ENCODE measurements at regions of chr3 and their contacts with region 1.

Region 1: GRCh38 chr3:15033103-15033502 is 32.0 kb downstream of the MRPS25 start:
- DNase-seq: no peak
- ATAC-seq: no peak
- H3K4me3 ChIP-seq: no peak overlapping the region
- H3K27ac ChIP-seq: no peak overlapping the region
- H3K4me1 ChIP-seq: no peaks in the 10 kb centered on the region
- H3K27me3 ChIP-seq: no peaks in the 10 kb centered on the region
- CTCF ChIP-seq: no peak

Region 2: GRCh38 chr3:14780927-14781507 is 252.1 kb before region 1 on chr3:
- CTCF ChIA-PET with region 1: interaction called, 15 read pairs
- POLR2A ChIA-PET with region 1: no interaction called
- intact Hi-C with region 1: no loop called
- DNase-seq: peak; percentile 74
- ATAC-seq: peak; percentile 99
- H3K4me3 ChIP-seq: no peak overlapping the region
- H3K27ac ChIP-seq: no peak overlapping the region
- H3K4me1 ChIP-seq: no peaks in the 10 kb centered on the region
- H3K27me3 ChIP-seq: no peaks in the 10 kb centered on the region
- CTCF ChIP-seq: peak; percentile 95

Region 3: DNA sequence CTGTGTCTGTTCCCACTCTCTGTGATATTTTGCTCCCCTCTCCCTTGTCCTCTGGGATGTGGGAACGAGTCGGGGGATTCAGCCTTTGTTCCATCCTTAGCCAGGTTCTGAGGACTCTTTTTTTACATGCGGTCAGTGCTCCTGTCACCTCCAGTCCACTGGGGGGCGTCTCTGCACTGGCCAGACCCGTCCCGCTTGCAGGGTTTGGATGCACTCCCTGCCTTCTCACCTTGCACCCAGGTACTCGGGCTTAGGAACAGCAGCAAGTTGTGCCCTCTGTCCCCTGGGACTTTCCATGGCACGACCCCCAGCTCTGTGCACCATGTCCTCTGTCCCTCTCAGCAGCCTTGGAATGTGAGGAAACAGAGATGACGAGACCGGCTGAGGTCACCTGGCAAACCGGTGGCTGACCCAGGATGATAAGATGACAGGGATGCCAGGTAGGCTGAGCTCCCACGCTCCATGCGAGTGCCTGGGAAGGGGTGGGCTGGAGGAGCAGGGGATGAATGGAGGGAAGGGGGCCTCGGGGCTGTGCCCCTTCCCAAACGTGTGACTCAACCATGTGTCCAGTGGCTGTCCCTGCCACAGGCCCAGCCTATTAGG is 241.7 kb before region 1 on chr3:
- CTCF ChIA-PET with region 1: no interaction called
- POLR2A ChIA-PET with region 1: no interaction called
- intact Hi-C with region 1: no loop called
- DNase-seq: peak; percentile 68
- ATAC-seq: peak; percentile 91
- H3K4me3 ChIP-seq: peak overlapping the region; percentile 28; the same call in 1 of the 2 replicates
- H3K27ac ChIP-seq: no peak overlapping the region
- H3K4me1 ChIP-seq: no peaks in the 10 kb centered on the region
- H3K27me3 ChIP-seq: peaks cover 38% of the 10 kb centered on the region
- CTCF ChIP-seq: peak; percentile 92

Region 4: DNA sequence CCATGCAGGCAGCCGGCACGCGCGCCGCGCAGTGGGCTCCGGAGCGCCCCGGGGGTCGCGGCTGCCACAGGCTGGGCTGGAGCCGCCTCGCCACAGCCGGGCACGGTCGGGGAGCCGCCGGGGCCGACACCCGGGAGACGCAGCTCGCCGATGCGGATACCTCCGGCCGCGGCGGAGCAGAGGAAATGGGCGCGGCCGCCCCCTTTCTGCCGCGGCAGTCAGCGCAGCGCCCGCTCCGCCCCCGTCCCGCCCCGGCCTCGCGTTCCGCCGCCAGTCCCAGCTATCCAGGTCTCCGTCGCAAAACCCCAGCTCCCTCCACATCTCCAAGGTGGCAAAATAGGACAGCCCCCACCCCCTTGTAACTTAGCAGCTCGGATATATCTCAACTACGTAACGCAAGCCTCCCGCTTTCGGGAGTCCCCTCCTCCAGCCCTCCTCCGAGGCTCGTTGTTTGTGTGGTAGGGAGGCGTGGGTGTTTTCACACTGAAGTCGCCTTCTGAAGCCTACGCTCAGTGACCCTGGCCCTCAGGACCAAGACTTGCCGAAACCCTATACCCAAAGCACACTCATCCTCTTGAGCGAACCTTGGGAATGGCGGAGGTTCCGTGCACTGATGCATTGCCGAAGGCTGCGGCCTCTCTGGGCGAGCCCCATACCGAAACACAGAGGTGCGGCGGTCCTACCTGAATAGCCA is 299.4 kb after region 1 on chr3 and contains the start of gene SH3BP5:
- CTCF ChIA-PET with region 1: no interaction called
- POLR2A ChIA-PET with region 1: no interaction called
- intact Hi-C with region 1: no loop called
- DNase-seq: peak; percentile 81
- ATAC-seq: peak; percentile 76
- H3K4me3 ChIP-seq: peak within 1 kb of the TSS; percentile 99
- H3K27ac ChIP-seq: no peak within 1 kb of the TSS
- H3K4me1 ChIP-seq: peaks cover 29% of the 10 kb centered on the region
- H3K27me3 ChIP-seq: no peaks in the 10 kb centered on the region
- CTCF ChIP-seq: peak; percentile 51; the same call in 1 of the 2 replicates
- total RNA-seq, gene SH3BP5: 21.2 and 23.0 TPM in 2 replicates

Region 5: DNA sequence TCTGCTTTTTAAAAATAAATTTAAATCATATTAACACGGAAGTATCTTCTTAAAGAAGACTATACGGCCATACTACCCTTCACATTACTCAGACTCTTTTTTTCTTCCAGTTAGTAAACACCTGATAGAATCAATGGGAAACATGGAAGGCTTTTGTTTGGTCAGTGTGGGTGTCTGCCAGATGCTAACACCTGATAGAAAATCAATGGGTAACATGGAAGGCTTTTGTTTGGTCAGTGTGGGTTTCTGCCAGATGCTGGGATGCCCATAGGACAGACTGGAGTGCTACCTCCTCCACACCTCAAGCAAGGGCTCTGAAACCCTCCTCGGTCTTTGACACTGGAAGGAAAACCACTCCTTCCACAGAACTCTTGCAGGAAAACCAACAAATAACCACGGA is 539.0 kb after region 1 on chr3:
- CTCF ChIA-PET with region 1: no interaction called
- POLR2A ChIA-PET with region 1: no interaction called
- intact Hi-C with region 1: no loop called
- DNase-seq: no peak
- ATAC-seq: no peak
- H3K4me3 ChIP-seq: no peak overlapping the region
- H3K27ac ChIP-seq: no peak overlapping the region
- H3K4me1 ChIP-seq: no peaks in the 10 kb centered on the region
- H3K27me3 ChIP-seq: no peaks in the 10 kb centered on the region
- CTCF ChIP-seq: no peak

Measured in PC-3 (cell line).